Activated T-helper 1 cell treated with anti-CD3 and anti-CD28 coated beads, Interleukin-12 subunit alpha, Interleukin-12 subunit beta, Interleukin-2, Interleukin-4 antibody, amounts not matched to agents 30 ng/mL and 10 ng/mL and 1 ng/mL, durations not matched to agents 14 hours and 24 hours and 36 hours (primary cell): ENCODE measurements at regions of chr9 and their contacts with region 1.

Region 1: DNA sequence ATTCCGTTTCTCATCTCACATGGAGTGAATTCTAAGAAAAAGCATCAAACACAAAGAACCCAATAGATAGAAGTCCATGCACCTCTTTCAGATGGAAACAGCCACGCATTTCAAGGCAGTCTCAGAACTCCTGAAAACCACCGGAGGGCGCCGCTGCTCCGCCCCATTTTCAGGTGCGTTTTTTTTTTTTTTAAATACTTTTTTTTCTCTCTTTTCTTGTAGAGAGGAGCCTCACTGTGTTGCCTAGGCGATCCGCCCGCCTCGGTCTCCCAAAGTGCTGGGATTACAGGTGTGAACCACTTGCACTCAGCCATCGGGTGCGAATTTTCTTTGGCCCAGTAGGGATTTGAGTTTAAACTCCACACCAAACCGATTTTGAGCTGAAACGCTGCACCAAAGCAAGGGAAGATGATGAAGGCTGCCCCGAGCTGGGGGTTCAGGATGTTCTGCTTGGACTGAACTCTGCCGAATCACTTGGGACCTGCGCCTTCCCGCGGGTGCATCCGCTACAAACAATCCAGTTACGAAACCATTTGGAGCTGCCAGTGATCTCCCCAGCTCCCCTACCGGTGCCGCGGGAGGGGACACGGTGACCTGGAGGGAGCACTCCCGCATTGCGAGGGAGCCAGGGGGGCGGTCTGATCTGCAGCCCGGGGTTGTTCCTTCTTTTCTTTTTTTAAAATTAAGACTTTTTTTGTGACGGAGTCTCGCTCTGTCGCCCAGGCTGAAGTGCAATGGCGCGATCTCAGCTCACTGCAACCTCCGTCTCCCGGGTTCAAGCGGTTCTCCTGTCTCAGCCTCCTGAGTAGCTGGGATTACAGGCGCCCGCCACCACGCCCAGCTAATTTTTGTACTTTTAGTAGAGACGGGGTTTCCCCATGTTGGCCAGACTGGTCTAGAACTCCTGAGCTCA is 1.4 kb downstream of the PTGR1 start:
- DNase-seq: peak; percentile 35
- H3K4me3 Mint-ChIP-seq: peak overlapping the region; percentile 83
- H3K27ac Mint-ChIP-seq: no peak overlapping the region
- H3K4me1 Mint-ChIP-seq: peaks cover 24% of the 10 kb centered on the region
- H3K27me3 Mint-ChIP-seq: peaks cover 33% of the 10 kb centered on the region

Region 2: DNA sequence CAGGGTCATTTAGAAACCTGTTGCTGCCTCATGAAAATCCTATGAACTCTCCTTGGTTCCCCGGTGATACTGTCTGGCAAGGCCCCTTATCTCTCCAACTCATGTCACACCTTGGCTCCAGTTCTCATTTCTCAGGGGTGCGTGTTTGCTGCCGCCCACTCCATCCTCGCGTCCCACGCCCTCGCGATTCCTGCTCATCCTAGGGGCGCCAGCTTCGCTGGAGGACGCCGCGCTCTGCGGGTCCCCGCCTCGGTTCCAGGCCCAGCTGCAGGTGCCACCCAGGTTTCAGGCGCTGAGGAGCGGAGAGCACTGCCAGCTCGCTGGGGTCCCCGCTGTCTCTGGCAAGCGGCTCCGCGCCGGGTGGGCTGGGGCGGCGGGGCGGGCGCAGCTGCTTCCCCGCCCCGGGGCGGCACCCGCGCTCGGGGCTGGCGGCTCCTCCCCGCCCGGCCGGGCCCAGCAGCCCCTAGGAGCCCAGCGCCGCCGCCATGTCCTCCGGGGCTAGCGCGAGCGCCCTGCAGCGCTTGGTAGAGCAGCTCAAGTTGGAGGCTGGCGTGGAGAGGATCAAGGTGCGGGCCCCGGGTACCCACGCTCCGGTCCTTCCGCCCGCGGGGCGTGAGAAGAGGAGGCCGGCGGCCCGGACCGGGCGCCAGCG is 63.2 kb after region 1 on chr9 and contains the start of gene GNG10:
- intact Hi-C with region 1: loop called (anchors 1 kb)
- DNase-seq: peak; percentile 66
- H3K4me3 Mint-ChIP-seq: peak within 1 kb of the TSS; percentile 89
- H3K27ac Mint-ChIP-seq: peak within 1 kb of the TSS; percentile 89
- H3K4me1 Mint-ChIP-seq: peaks cover 34% of the 10 kb centered on the region
- H3K27me3 Mint-ChIP-seq: no peaks in the 10 kb centered on the region
- total RNA-seq, gene GNG10: 30.7 and 35.4 TPM in 2 replicates

Region 3: GRCh38 chr9:111691672-111692329 is 93.7 kb after region 1 on chr9:
- intact Hi-C with region 1: loop called (anchors 1 kb)
- DNase-seq: no peak
- H3K4me3 Mint-ChIP-seq: no peak overlapping the region
- H3K27ac Mint-ChIP-seq: no peak overlapping the region
- H3K4me1 Mint-ChIP-seq: no peaks in the 10 kb centered on the region
- H3K27me3 Mint-ChIP-seq: peaks cover 2% of the 10 kb centered on the region